ENCODE measurements at regions of chr2 and their contacts with region 1.

Region 1: GRCh38 chr2:235746257-235747084 is 252.6 kb downstream of the AGAP1 start:
- DNase-seq: peak; percentile 79
- H3K4me3 ChIP-seq: no peak overlapping the region
- H3K27ac ChIP-seq: peak overlapping the region; percentile 21
- H3K27me3 ChIP-seq: no peaks in the 10 kb centered on the region
- CTCF ChIP-seq: peak; percentile 87

Region 2: DNA sequence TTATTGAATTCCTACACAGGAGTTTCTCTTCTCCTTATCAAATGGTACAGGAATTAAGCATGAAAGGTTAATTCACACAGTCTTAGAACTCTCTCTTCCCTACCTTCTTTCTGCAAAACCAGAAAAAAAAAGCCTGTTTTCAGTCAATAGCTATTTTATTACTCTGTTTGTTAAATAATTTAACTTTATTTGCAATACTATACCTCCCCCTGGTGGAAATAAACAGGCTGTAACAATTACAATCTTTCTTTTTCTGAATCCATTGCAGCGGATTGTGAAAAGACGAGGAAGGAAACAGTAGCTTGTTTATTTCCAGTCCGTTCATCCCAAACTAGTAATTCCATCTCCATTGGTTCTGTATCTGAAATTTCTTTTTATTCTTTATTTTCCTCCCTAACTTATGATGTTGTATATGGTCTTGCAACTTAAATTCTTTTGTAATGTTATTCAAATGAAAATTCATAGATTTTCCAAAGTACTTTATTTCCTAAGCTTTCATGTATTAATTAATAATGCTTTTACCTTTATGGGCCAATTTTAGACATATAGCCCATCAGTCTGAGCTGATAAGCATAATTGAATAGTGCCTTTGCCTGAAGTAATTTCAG is 629.5 kb before region 1 on chr2:
- CTCF ChIA-PET with region 1: interaction called, 15 read pairs
- POLR2A ChIA-PET with region 1: no interaction called
- DNase-seq: no peak
- H3K4me3 ChIP-seq: no peak overlapping the region
- H3K27ac ChIP-seq: no peak overlapping the region
- H3K27me3 ChIP-seq: no peaks in the 10 kb centered on the region
- CTCF ChIP-seq: peak; percentile 64

Region 3: DNA sequence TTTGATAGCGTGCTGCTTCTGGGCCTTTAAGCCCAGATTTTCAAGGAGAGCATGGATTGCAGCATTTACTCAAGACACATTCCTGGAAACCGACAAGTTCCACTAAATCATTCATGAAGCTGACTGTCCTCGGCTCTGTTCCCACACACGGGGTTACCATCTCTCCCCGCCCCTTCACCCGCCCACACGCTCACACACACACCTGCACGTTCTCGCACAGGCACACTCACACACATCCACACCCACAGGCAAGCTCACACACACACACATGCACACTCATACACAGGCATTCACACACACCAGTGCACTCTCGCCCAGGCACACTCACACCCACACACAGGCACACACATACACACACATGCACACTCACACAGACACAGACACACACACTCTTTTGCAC is 402.6 kb before region 1 on chr2:
- CTCF ChIA-PET with region 1: no interaction called
- POLR2A ChIA-PET with region 1: no interaction called
- DNase-seq: no peak
- H3K4me3 ChIP-seq: no peak overlapping the region
- H3K27ac ChIP-seq: no peak overlapping the region
- H3K27me3 ChIP-seq: peaks cover 4% of the 10 kb centered on the region
- CTCF ChIP-seq: no peak

Region 4: GRCh38 chr2:235500761-235501672 is 245.5 kb before region 1 on chr2:
- CTCF ChIA-PET with region 1: interaction called, 15 read pairs
- POLR2A ChIA-PET with region 1: no interaction called
- DNase-seq: no peak
- H3K4me3 ChIP-seq: no peak overlapping the region
- H3K27ac ChIP-seq: no peak overlapping the region
- H3K27me3 ChIP-seq: no peaks in the 10 kb centered on the region
- CTCF ChIP-seq: no peak

Region 5: GRCh38 chr2:235588750-235589149 is 157.7 kb before region 1 on chr2:
- CTCF ChIA-PET with region 1: interaction called, 375 read pairs
- POLR2A ChIA-PET with region 1: no interaction called
- DNase-seq: no peak
- H3K4me3 ChIP-seq: no peak overlapping the region
- H3K27ac ChIP-seq: no peak overlapping the region
- H3K27me3 ChIP-seq: no peaks in the 10 kb centered on the region
- CTCF ChIP-seq: no peak

Region 6: GRCh38 chr2:235618039-235618438 is 128.4 kb before region 1 on chr2:
- CTCF ChIA-PET with region 1: interaction called, 18 read pairs
- POLR2A ChIA-PET with region 1: no interaction called
- DNase-seq: peak; percentile 58
- H3K4me3 ChIP-seq: no peak overlapping the region
- H3K27ac ChIP-seq: peak overlapping the region; percentile 77
- H3K27me3 ChIP-seq: peaks cover 5% of the 10 kb centered on the region
- CTCF ChIP-seq: no peak

Region 7: GRCh38 chr2:235698028-235698427 is 48.4 kb before region 1 on chr2:
- CTCF ChIA-PET with region 1: interaction called, 26 read pairs
- POLR2A ChIA-PET with region 1: no interaction called
- DNase-seq: no peak
- H3K4me3 ChIP-seq: no peak overlapping the region
- H3K27ac ChIP-seq: no peak overlapping the region
- H3K27me3 ChIP-seq: no peaks in the 10 kb centered on the region
- CTCF ChIP-seq: no peak

Region 8: DNA sequence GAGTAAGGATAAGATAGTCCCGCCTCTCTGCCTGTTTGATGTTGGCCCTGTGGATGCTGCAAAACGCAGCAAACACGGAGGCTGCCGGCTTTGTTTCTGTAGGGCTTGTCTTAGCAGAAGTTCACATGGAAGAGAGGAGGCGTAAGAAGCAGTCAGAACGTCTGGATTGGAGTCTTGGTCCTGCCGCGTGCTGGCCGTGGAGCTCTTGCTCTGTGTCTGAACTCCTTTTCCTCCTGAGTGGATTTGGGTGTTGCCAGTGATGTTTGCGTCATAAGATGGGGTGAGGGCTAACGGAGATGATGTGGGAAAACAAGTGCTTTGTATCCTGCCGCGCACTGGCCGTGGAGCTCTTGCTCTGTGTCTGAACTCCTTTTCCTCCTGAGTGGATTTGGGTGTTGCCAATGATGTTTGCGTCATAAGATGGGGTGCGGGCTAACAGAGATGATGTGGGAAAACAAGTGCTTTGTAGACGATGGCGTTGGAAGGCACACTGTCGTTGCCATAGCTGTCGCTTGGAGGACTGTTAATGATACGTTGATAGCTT is 11.7 kb before region 1 on chr2:
- CTCF ChIA-PET with region 1: interaction called, 41 read pairs
- POLR2A ChIA-PET with region 1: no interaction called
- DNase-seq: no peak
- H3K4me3 ChIP-seq: no peak overlapping the region
- H3K27ac ChIP-seq: no peak overlapping the region
- H3K27me3 ChIP-seq: no peaks in the 10 kb centered on the region
- CTCF ChIP-seq: no peak

Region 9: GRCh38 chr2:235826826-235827225 is 80.4 kb after region 1 on chr2:
- CTCF ChIA-PET with region 1: no interaction called
- POLR2A ChIA-PET with region 1: no interaction called
- DNase-seq: no peak
- H3K4me3 ChIP-seq: no peak overlapping the region
- H3K27ac ChIP-seq: no peak overlapping the region
- H3K27me3 ChIP-seq: no peaks in the 10 kb centered on the region
- CTCF ChIP-seq: no peak

Measured in AG04450 (cell line).